ENCODE measurements at regions of chr17 and their contacts with region 1.

Region 1: DNA sequence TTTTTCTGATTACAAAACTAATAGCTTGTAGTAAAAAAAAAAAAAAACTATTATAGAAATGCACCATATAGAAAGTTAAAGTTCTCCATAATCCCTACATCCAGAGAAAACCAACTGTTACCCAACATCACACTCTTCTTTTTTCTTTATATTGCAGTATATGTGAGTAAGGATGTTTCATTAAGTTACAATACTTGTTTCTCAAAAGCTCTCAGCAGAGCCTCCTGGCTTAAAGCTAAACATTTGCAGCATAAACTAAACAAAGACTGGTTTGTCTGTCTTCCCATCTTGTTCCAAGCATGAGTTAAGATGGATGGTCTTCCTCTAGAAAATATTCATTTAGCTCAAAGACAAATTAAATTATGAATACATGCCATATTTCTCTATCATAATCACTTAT is 25.2 kb downstream of the GRB2 start:
- DNase-seq: no peak
- ATAC-seq: no peak
- H3K4me3 ChIP-seq: no peak overlapping the region
- H3K4me3 Mint-ChIP-seq: peak overlapping the region in 1 of 10 donors; percentile 18
- H3K27ac ChIP-seq: no peak overlapping the region
- H3K27ac Mint-ChIP-seq: peak overlapping the region in 2 of 9 donors; percentile 56 to 64
- H3K4me1 ChIP-seq: peaks cover 0 to 8% of the 10 kb centered on the region in 2 donors
- H3K4me1 Mint-ChIP-seq: peaks cover 13 to 76% (median 56%) of the 10 kb centered on the region in 7 donors
- H3K27me3 ChIP-seq: no peaks in the 10 kb centered on the region
- H3K27me3 Mint-ChIP-seq: no peaks in the 10 kb centered on the region

Region 2: DNA sequence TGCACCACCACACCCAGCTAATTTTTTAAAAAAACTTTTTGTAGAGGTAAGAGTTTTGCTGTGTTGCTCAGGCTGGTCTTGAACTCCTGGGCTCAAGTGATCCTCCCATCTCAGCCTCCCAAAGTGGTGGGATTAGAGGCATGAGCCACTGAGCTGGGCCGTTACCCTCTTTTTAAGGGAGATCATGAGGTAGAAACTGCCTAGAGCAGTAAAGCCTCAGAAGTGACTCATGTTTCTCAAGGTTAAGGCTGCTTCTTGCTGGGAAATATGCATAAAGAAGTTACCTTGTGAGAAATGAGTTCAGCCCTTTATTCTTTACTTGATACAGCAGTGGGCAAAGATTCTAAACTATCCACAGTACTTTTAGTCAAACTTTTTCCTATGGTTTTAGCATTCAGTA is 13.0 kb before region 1 on chr17:
- CTCF ChIA-PET with region 1: interaction called, 3 read pairs
- POLR2A ChIA-PET with region 1: no interaction called
- intact Hi-C with region 1: loop called in 1 of 2 experiments (anchors 2 kb)
- DNase-seq: no peak
- ATAC-seq: no peak
- H3K4me3 ChIP-seq: no peak overlapping the region
- H3K4me3 Mint-ChIP-seq: peak overlapping the region in 5 of 10 donors; percentile 10 to 49 (median 33)
- H3K27ac ChIP-seq: no peak overlapping the region
- H3K27ac Mint-ChIP-seq: peak overlapping the region in 5 of 9 donors; percentile 18 to 58 (median 49)
- H3K4me1 ChIP-seq: peaks cover 65 to 77% of the 10 kb centered on the region in 2 donors
- H3K4me1 Mint-ChIP-seq: peaks cover 84 to 100% (median 91%) of the 10 kb centered on the region in 7 donors
- H3K27me3 ChIP-seq: no peaks in the 10 kb centered on the region
- H3K27me3 Mint-ChIP-seq: no peaks in the 10 kb centered on the region

Region 3: GRCh38 chr17:75393523-75394331 is 13.4 kb after region 1 on chr17:
- CTCF ChIA-PET with region 1: interaction called, 4 read pairs
- POLR2A ChIA-PET with region 1: interaction called, 4 read pairs
- intact Hi-C with region 1: loop called in 1 of 2 experiments (anchors 2 kb)
- DNase-seq: peak; percentile 50 to 79 (median 55)
- ATAC-seq: peak; percentile 95
- H3K4me3 ChIP-seq: peak overlapping the region; percentile 55
- H3K4me3 Mint-ChIP-seq: peak overlapping the region; percentile 87 to 98 (median 93)
- H3K27ac ChIP-seq: peak overlapping the region; percentile 48
- H3K27ac Mint-ChIP-seq: peak overlapping the region; percentile 45 to 93 (median 83)
- H3K4me1 ChIP-seq: peaks cover 11 to 49% of the 10 kb centered on the region in 2 donors
- H3K4me1 Mint-ChIP-seq: peaks cover 70 to 95% (median 85%) of the 10 kb centered on the region in 7 donors
- H3K27me3 ChIP-seq: no peaks in the 10 kb centered on the region
- H3K27me3 Mint-ChIP-seq: no peaks in the 10 kb centered on the region

Measured in naive thymus-derived CD4-positive, alpha-beta T cell (primary cell).